Right cardiac atrium (tissue), 5 donors: ENCODE measurements at regions of chr14 and their contacts with region 1.

Region 1: DNA sequence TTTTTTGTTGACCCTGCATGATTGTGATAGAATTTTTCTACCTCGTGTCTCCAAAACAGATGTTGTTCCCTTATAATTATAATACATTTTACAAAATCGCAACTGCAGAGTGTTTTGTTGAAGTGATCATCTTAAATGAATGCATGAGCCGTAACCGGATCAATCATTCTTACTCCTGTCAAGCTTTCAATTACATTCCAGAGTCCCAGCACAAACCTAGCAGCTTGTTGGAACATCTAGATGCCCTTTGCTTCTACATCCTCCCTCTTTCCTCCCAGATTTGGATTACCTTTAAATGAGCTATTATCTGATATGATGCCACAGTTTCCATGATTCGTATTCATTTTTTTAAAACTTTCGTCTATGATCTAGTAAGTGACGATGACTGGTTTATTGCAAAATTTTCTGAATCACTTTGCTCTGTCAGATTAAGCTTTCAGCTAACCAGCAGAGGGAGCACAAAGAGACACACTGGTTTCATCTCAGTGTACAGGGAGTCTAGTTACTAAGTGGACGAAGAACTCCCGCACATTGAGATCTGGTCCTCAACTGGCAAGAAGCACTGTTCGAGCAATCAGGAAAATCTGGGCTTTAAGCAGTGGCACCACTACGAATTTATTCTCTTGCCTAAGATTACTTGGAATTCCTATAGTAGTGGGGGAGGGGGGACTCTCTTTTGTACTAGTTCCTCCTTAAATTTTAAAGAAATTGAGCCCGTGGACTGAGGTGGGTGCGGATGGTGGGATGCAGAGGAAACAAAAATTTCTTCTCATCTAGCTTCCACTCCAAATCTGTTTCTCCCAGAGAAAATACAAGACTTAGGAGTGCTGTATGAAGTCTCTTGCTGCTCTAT is 40.9 kb downstream of the TSHR start:
- DNase-seq: no peak
- ATAC-seq: peak; percentile 89 to 93
- H3K4me3 ChIP-seq: no peak overlapping the region
- H3K27ac ChIP-seq: no peak overlapping the region
- H3K4me1 ChIP-seq: no peaks in the 10 kb centered on the region
- H3K27me3 ChIP-seq: no peaks in the 10 kb centered on the region

Region 2: GRCh38 chr14:81153187-81153586 is 156.9 kb after region 1 on chr14:
- intact Hi-C with region 1: loop called in 1 of 4 experiments (anchors 5 kb)
- DNase-seq: no peak
- ATAC-seq: no peak
- H3K4me3 ChIP-seq: no peak overlapping the region
- H3K27ac ChIP-seq: no peak overlapping the region
- H3K4me1 ChIP-seq: no peaks in the 10 kb centered on the region
- H3K27me3 ChIP-seq: no peaks in the 10 kb centered on the region

Region 3: GRCh38 chr14:81170104-81170828 is 174.0 kb after region 1 on chr14:
- intact Hi-C with region 1: loop called in 2 of 4 experiments (anchors 5 kb)
- DNase-seq: peak; percentile 95 to 97 (median 97)
- ATAC-seq: peak; percentile 100
- H3K4me3 ChIP-seq: peak overlapping the region; percentile 65
- H3K27ac ChIP-seq: peak overlapping the region; percentile 99
- H3K4me1 ChIP-seq: no peaks in the 10 kb centered on the region
- H3K27me3 ChIP-seq: no peaks in the 10 kb centered on the region

Region 4: GRCh38 chr14:81550001-81550637 is 553.8 kb after region 1 on chr14:
- intact Hi-C with region 1: no loop called
- DNase-seq: no peak
- ATAC-seq: no peak
- H3K4me3 ChIP-seq: no peak overlapping the region
- H3K27ac ChIP-seq: no peak overlapping the region
- H3K4me1 ChIP-seq: no peaks in the 10 kb centered on the region
- H3K27me3 ChIP-seq: no peaks in the 10 kb centered on the region